Ascending aorta (tissue), 2 donors: ENCODE measurements at regions of chr22 and their contacts with region 1.

Region 1: GRCh38 chr22:43955040-43955882 is at the start of gene SAMM50:
- DNase-seq: peak; percentile 71 to 95
- H3K4me3 ChIP-seq: peak within 1 kb of the TSS; percentile 89 to 98
- H3K27ac ChIP-seq: peak within 1 kb of the TSS; percentile 79
- H3K4me1 ChIP-seq: peaks cover 9 to 18% of the 10 kb centered on the region in 2 donors
- H3K27me3 ChIP-seq: no peaks in the 10 kb centered on the region
- CTCF ChIP-seq: peak in 1 of 3 experiments; percentile 12
- total RNA-seq, gene SAMM50: 23.6 TPM

Region 2: DNA sequence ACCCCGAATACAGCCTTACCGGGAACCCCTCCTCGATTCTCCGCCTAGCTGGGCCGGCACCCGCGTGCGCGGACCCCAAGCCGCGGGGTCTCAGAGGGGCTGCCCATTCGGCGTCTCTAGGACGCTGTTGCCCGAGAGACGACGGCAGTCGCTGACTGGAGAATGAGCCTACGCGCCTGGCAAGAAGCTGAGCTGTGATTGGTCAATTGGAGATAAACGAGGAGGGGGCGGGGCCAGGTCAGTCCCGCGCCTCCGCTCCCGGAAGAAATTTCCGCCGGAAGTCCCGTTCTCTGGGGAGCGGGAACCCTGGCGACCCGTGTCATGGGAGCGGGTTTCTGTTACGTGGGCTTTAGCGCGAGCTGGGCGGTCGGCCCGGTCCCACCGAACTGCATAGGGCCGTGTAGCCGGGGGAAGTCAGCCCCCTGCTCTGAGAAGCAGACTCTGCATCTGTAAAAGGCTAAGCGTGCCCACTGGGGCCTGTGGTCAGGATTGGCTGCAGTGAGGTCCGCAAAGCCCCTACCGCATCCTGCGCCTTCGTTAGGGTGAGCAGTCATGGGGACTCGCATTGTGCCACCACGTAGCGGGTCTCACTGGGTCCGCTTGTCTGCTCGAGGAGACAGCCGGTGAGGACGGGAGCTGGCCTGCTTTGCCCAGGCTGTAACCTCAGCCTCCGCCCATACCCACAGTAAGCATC is 143.0 kb before region 1 on chr22 and contains the start of gene EFCAB6:
- intact Hi-C with region 1: loop called (anchors 5 kb)
- DNase-seq: peak; percentile 65 to 94
- H3K4me3 ChIP-seq: peak within 1 kb of the TSS; percentile 82 to 89
- H3K27ac ChIP-seq: peak within 1 kb of the TSS; percentile 63 to 81
- H3K4me1 ChIP-seq: peaks cover 3 to 7% of the 10 kb centered on the region in 2 donors
- H3K27me3 ChIP-seq: no peaks in the 10 kb centered on the region
- CTCF ChIP-seq: no peak
- total RNA-seq, gene EFCAB6: 8.6 TPM

Region 3: DNA sequence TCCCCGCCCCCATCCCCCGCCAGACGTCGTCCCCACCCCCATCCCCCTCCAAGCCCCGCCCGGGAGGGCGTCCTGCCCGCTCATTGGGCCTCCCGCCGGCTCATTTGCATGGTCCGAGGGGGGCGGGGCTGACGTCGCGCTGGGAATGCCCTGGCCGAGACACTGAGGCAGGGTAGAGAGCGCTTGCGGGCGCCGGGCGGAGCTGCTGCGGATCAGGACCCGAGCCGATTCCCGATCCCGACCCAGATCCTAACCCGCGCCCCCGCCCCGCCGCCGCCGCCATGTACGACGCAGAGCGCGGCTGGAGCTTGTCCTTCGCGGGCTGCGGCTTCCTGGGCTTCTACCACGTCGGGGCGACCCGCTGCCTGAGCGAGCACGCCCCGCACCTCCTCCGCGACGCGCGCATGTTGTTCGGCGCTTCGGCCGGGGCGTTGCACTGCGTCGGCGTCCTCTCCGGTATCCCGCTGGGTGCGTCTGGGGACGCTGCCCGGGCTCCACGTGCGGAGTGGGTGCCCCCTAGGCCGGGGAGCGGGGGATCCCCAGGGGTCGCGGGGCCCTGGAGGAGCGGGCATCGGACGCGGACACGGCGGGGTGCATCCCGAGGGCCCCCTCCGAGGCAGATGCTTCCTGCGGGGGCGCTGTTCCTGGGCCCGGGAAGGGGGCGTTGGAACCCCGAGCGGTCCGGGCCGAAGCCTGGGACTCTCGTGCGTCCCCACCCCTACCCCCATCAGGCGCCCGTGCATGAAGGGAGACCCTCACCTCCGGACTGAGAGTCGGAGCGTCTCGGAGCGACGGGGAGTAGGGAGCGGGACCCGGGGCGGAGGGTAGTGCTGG is 31.4 kb before region 1 on chr22 and contains the start of gene PNPLA3:
- intact Hi-C with region 1: loop called (anchors 2 kb)
- DNase-seq: peak; percentile 26 to 90
- H3K4me3 ChIP-seq: peak within 1 kb of the TSS; percentile 55 to 76
- H3K27ac ChIP-seq: no peak within 1 kb of the TSS
- H3K4me1 ChIP-seq: peaks cover 0 to 9% of the 10 kb centered on the region in 2 donors
- H3K27me3 ChIP-seq: peaks cover 14% of the 10 kb centered on the region
- CTCF ChIP-seq: no peak
- total RNA-seq, gene PNPLA3: not detected